Cardiac septum (tissue), 1 donor: ENCODE measurements at regions of chr9 and their contacts with region 1.

Region 1: GRCh38 chr9:81609782-81610739 is 79.3 kb downstream of the TLE1 start:
- DNase-seq: no peak

Region 2: DNA sequence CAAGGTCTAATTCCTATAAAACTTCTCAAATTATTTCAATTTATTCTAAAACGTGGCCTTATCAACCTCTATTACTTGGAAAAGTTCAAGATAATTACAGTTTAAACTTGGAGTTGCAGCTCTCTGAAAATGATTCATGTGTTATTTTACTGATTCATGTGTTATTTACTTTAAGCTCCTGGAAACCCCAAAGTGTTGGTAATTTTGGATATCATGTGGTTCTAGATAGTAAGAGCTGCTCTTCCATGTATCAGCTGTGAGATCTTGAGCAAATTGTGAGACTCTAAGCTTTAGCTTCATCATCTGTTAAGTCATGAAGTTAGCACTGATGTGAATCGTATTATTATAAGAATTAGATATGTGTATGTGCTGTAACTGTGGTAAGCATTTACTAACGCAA is 1289.1 kb before region 1 on chr9:
- intact Hi-C with region 1: loop called (anchors 10 kb)
- DNase-seq: no peak

Region 3: DNA sequence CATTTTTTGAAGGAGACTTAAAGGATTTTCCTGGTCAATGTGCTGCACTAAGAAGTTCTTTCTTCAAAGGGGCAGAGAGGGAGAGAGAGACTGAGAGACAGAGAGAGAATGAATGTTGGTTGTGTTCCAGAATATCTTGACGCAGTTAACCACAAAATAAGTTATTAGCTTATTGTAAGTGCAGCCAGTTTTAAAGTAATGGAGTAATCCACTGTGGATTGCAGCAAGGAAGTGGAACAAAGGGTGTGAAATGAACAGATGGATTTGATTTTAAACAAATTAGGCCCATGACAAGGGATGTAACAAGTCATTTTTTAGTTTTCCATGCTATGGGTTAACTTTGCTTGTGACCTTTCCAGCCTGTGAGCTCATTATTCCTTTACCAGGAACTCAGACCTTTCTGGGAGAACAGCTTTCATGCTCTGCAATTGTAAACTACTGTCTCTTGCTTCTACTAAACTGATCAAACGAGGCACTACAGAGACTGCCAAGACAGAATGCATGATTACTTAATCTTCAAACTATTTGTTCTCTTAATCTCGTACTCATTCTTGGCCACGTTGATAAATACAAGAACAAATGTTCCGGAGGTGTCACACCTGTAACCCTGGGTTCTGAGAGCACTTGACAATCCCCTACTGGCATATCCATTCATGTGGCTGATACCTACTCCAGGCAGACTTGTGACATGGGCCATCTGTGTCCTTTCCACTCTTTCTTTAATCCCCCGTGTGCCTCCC is 51.8 kb before region 1 on chr9:
- intact Hi-C with region 1: loop called (anchors 2 kb)
- DNase-seq: no peak

Region 4: DNA sequence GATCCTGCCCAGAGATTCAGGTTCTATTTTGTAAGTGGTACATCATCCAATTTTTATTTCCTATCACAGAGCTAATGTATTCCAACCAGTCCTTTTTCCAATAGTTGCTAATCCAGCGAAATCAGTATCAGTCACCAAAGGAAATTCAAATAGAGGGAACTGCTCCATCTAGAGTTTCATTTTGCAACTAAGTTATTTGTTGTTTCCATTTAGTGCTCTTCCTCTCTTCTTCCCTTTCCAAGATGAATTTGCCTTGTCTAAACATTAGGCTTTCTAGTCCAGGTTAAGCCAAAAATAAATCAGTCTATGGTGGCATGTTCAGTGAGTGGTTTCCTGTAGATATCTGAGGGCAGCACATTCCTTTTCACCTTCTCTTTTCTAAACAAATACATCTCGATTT is 238.4 kb after region 1 on chr9:
- intact Hi-C with region 1: loop called (anchors 10 kb)
- DNase-seq: no peak